ENCODE measurements at regions of chr6 and their contacts with region 1.

Region 1: DNA sequence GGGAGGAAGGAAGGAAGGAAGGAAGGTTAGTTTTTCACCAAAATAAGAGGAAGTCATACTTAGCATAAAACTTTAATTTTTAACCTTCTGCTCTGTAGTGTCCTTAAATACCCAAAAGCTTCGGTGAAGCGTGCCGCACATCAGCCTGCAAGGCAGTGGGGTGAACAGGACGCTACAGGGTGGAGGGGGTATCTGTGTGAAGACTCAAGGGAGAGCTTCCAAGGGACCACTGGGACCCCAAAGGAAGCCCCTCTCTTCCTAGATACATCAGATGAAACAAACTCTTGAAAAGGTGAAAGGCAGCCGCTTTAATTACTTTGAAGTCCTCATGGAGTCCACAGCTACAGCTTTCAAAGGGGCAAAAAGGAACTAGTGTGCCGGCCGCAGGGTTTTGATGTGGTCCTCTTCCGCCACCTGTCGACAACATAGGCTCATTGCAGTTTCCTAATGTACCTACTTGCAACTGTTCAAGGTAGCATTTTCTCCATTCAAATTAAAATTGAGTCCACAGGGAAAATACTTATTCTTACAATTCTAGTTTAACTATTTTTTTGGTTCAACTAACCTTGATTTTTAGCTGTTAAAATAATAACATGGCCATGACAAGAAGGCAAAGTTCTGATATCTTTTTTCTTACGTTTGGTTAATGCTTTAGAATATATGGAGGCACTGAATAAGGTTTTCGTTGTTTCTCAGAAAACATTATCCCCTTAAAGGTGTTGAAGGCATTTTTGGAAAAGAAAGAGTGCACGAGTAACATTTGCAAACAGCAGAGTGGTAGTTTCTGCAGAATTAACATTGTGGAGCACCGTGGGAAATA is 135.0 kb upstream of the RIPOR2 start:
- DNase-seq: peak; percentile 74
- H3K4me3 Mint-ChIP-seq: no peak overlapping the region
- H3K27ac Mint-ChIP-seq: peak overlapping the region; percentile 77
- H3K4me1 Mint-ChIP-seq: peaks cover 8% of the 10 kb centered on the region
- H3K27me3 Mint-ChIP-seq: peaks cover 5% of the 10 kb centered on the region

Region 2: GRCh38 chr6:24581084-24581669 is 489.6 kb before region 1 on chr6:
- intact Hi-C with region 1: loop called (anchors 2 kb)
- DNase-seq: peak; percentile 52
- H3K4me3 Mint-ChIP-seq: no peak overlapping the region
- H3K27ac Mint-ChIP-seq: no peak overlapping the region
- H3K4me1 Mint-ChIP-seq: peaks cover 5% of the 10 kb centered on the region
- H3K27me3 Mint-ChIP-seq: peaks cover 8% of the 10 kb centered on the region

Region 3: GRCh38 chr6:24855395-24856245 is 215.1 kb before region 1 on chr6:
- intact Hi-C with region 1: loop called (anchors 1 kb)
- DNase-seq: peak; percentile 57
- H3K4me3 Mint-ChIP-seq: no peak overlapping the region
- H3K27ac Mint-ChIP-seq: peak overlapping the region; percentile 31
- H3K4me1 Mint-ChIP-seq: peaks cover 49% of the 10 kb centered on the region
- H3K27me3 Mint-ChIP-seq: no peaks in the 10 kb centered on the region

Region 4: GRCh38 chr6:25027221-25027916 is 43.4 kb before region 1 on chr6:
- intact Hi-C with region 1: loop called (anchors 1 kb)
- DNase-seq: peak; percentile 78
- H3K4me3 Mint-ChIP-seq: peak overlapping the region; percentile 71
- H3K27ac Mint-ChIP-seq: peak overlapping the region; percentile 78
- H3K4me1 Mint-ChIP-seq: peaks cover 40% of the 10 kb centered on the region
- H3K27me3 Mint-ChIP-seq: no peaks in the 10 kb centered on the region

Region 5: DNA sequence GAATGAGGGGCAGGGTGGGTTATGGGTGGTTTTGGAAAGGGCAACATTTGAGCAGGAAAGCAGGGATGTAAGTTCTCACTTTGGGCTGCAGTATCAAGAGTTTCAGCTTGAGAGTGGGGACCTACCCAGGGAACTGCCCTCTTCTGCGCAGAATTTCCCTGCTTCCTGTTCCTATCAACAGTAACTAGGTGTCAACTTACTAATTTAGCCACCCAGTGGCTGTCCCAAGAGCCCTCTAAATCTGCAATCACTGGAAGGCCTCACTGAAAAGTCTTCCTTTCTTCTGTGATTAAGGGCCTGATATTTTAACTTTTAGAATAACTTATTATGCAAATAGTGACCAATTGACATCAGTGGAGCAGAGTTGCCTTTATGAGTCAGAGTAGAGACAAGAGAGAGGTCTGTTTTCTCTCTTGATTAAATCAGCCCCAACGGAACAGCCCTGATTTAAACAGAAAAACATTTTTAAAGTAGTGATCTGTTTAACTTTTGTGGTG is 16.8 kb before region 1 on chr6:
- intact Hi-C with region 1: loop called (anchors 2 kb)
- DNase-seq: no peak
- H3K4me3 Mint-ChIP-seq: no peak overlapping the region
- H3K27ac Mint-ChIP-seq: peak overlapping the region; percentile 73
- H3K4me1 Mint-ChIP-seq: peaks cover 69% of the 10 kb centered on the region
- H3K27me3 Mint-ChIP-seq: no peaks in the 10 kb centered on the region